Ovary (tissue), 10 donors: ENCODE measurements at regions of chr2 and their contacts with region 1.

Region 1: GRCh38 chr2:189661148-189661956 is at the start of gene ASNSD1:
- DNase-seq: peak; percentile 98 to 99 (median 99)
- H3K4me3 ChIP-seq: peak within 1 kb of the TSS; percentile 84
- H3K27ac ChIP-seq: peak within 1 kb of the TSS; percentile 31 to 66
- H3K4me1 ChIP-seq: peaks cover 10% of the 10 kb centered on the region
- H3K27me3 ChIP-seq: no peaks in the 10 kb centered on the region
- CTCF ChIP-seq: peak; percentile 99
- EP300 ChIP-seq: no peak
- POLR2A ChIP-seq: peak; percentile 87
- total RNA-seq, gene ASNSD1: 38.5 to 61.9 (median 47.3) TPM

Region 2: GRCh38 chr2:189569295-189569910 is 91.9 kb before region 1 on chr2:
- intact Hi-C with region 1: no loop called
- DNase-seq: no peak
- H3K4me3 ChIP-seq: no peak overlapping the region
- H3K27ac ChIP-seq: peak overlapping the region in 1 of 2 donors; percentile 55
- H3K4me1 ChIP-seq: peaks cover 25% of the 10 kb centered on the region
- H3K27me3 ChIP-seq: no peaks in the 10 kb centered on the region
- CTCF ChIP-seq: no peak
- EP300 ChIP-seq: no peak
- POLR2A ChIP-seq: no peak

Region 3: GRCh38 chr2:189698020-189698887 is 36.9 kb after region 1 on chr2:
- intact Hi-C with region 1: loop called in 2 of 4 experiments (anchors 5 kb)
- DNase-seq: peak in 2 of 5 donors; percentile 32 to 60
- H3K4me3 ChIP-seq: no peak overlapping the region
- H3K27ac ChIP-seq: no peak overlapping the region
- H3K4me1 ChIP-seq: no peaks in the 10 kb centered on the region
- H3K27me3 ChIP-seq: no peaks in the 10 kb centered on the region
- CTCF ChIP-seq: peak in 1 of 3 donors; percentile 43
- EP300 ChIP-seq: no peak
- POLR2A ChIP-seq: no peak